Mammary epithelial cell (primary cell): ENCODE measurements at regions of chr6 and their contacts with region 1.

Region 1: GRCh38 chr6:134174672-134175198 is 122.3 kb upstream of the SLC2A12 start:
- DNase-seq: peak; percentile 90
- H3K4me3 ChIP-seq: peak overlapping the region; percentile 52 to 99 (median 97)
- H3K27ac ChIP-seq: peak overlapping the region; percentile 94
- H3K4me1 ChIP-seq: peaks cover 43% of the 10 kb centered on the region
- H3K27me3 ChIP-seq: no peaks in the 10 kb centered on the region
- CTCF ChIP-seq: peak in 1 of 2 donors; percentile 8

Region 2: GRCh38 chr6:134035823-134036296 is 138.9 kb before region 1 on chr6:
- CTCF ChIA-PET with region 1: no interaction called
- dilution Hi-C with region 1: no loop called
- in situ Hi-C with region 1: no loop called
- intact Hi-C with region 1: no loop called
- DNase-seq: peak; percentile 98
- H3K4me3 ChIP-seq: no peak overlapping the region
- H3K27ac ChIP-seq: peak overlapping the region; percentile 99
- H3K4me1 ChIP-seq: peaks cover 37% of the 10 kb centered on the region
- H3K27me3 ChIP-seq: no peaks in the 10 kb centered on the region
- CTCF ChIP-seq: no peak

Region 3: DNA sequence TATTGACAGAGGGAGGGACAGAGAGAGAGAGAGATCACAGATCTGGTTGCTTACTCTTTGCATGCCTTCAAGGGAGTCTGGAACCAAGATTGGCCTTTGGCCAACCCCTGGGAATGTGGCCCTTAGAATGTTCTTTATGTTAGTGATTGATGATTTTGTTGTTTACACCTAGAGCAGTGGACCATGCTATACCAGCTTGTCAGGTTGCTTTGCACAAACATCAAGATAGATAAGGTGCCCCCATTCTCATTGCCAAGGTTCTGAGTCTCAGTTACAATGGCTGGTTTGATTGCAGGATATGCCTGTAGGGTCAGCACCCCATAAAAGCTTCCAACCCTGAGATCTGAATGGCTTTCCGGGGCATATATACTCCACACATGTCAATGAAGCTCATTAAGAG is 68.8 kb before region 1 on chr6:
- CTCF ChIA-PET with region 1: no interaction called
- dilution Hi-C with region 1: no loop called
- in situ Hi-C with region 1: no loop called
- intact Hi-C with region 1: no loop called
- DNase-seq: no peak
- H3K4me3 ChIP-seq: no peak overlapping the region
- H3K27ac ChIP-seq: no peak overlapping the region
- H3K4me1 ChIP-seq: no peaks in the 10 kb centered on the region
- H3K27me3 ChIP-seq: no peaks in the 10 kb centered on the region
- CTCF ChIP-seq: no peak

Region 4: GRCh38 chr6:134347916-134348805 is 173.4 kb after region 1 on chr6:
- CTCF ChIA-PET with region 1: no interaction called
- dilution Hi-C with region 1: no loop called
- in situ Hi-C with region 1: no loop called
- intact Hi-C with region 1: loop called (anchors 10 kb)
- DNase-seq: peak; percentile 56
- H3K4me3 ChIP-seq: no peak overlapping the region
- H3K27ac ChIP-seq: no peak overlapping the region
- H3K4me1 ChIP-seq: no peaks in the 10 kb centered on the region
- H3K27me3 ChIP-seq: no peaks in the 10 kb centered on the region
- CTCF ChIP-seq: no peak

Region 5: DNA sequence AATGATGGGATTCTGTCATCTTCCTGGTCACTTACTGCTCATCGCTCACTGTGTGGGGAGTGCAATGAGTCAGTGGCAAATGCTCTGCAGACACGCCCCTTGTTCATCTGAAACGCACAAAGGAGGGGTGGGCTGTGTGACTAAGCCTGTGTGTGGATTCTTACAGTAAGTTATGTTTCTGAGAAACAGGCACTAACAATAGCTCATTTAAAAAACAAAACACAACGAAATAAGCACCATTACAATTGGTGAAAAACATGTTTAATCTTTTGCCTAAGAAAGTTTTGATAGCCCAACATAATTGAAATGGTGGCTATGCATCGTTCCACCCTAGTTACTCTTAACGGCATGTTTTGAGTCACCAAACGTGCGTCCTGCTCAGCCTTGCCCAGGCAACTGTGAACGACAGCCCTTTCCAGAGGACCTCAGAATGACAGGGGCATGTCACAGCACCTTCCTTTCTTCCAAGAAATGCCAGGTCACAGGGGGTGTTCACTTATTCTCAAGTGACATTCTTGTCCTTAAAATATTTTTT is 261.6 kb after region 1 on chr6:
- CTCF ChIA-PET with region 1: no interaction called
- dilution Hi-C with region 1: no loop called
- in situ Hi-C with region 1: no loop called
- intact Hi-C with region 1: loop called (anchors 1 kb)
- DNase-seq: peak; percentile 97
- H3K4me3 ChIP-seq: peak overlapping the region in 1 of 3 experiments; percentile 8
- H3K27ac ChIP-seq: peak overlapping the region; percentile 98
- H3K4me1 ChIP-seq: peaks cover 33% of the 10 kb centered on the region
- H3K27me3 ChIP-seq: no peaks in the 10 kb centered on the region
- CTCF ChIP-seq: no peak

Region 6: DNA sequence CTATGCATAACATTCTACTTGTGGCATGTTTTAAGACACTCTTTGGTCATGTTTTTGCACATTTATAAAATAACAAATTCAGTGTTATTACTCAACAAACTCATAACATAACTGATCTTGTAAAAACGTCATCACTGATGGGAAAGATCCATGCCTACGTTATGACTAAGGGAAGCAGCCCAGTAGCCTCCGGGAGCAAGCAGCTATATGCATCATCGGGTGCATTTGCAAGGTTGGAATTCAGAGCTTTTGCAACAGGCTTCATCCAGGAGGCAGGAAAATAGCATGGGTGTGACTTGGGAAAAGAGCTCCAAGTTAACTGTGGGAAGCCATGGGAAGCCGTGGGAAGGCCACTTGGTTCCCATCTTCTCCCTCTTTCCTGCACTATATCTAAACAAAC is 414.8 kb after region 1 on chr6:
- CTCF ChIA-PET with region 1: interaction called, 3 read pairs
- dilution Hi-C with region 1: no loop called
- in situ Hi-C with region 1: no loop called
- intact Hi-C with region 1: loop called (anchors 1 kb)
- DNase-seq: peak; percentile 96
- H3K4me3 ChIP-seq: no peak overlapping the region
- H3K27ac ChIP-seq: peak overlapping the region; percentile 84
- H3K4me1 ChIP-seq: peaks cover 24% of the 10 kb centered on the region
- H3K27me3 ChIP-seq: no peaks in the 10 kb centered on the region
- CTCF ChIP-seq: no peak

Region 7: DNA sequence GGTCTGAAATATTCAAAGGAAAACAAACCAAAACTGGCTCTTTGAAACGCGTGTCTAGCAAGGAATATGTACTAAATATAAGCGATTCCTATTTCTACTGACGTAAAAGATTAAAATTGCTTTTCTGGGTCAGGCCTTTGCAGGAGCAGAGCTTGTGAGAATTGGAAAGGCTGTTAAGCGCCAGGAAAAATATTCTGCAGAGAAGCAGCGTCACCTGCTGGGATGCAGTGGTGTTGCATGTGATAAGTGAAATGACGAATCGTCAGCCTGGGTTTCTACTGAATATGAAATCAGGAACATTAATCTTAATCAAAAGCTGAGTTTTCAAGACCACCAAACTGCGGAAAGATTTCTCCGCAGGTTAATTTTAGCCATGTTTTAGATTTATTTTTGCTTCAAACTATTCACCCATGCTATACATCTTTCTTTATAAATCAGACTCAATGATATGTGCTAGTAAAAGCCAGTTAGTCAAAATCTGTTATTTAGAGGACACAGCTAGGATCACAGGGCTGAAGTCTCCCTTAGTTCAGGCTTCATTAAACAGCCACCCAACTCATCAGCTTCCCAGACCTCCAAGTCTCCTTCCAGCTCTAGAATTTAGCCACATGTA is 707.8 kb after region 1 on chr6:
- CTCF ChIA-PET with region 1: no interaction called
- dilution Hi-C with region 1: no loop called
- in situ Hi-C with region 1: loop called in 1 of 2 experiments (anchors 10 kb)
- intact Hi-C with region 1: loop called (anchors 1 kb)
- DNase-seq: peak; percentile 67
- H3K4me3 ChIP-seq: no peak overlapping the region
- H3K27ac ChIP-seq: no peak overlapping the region
- H3K4me1 ChIP-seq: no peaks in the 10 kb centered on the region
- H3K27me3 ChIP-seq: no peaks in the 10 kb centered on the region
- CTCF ChIP-seq: peak; percentile 98